ENCODE measurements at regions of chr1 and their contacts with region 1.

Region 1: GRCh38 chr1:32400876-32401631 is 6.8 kb upstream of the BSDC1 start:
- DNase-seq: peak; percentile 31
- H3K4me3 ChIP-seq: no peak overlapping the region
- CTCF ChIP-seq: peak; percentile 84

Region 2: GRCh38 chr1:32413507-32414185 is 12.6 kb after region 1 on chr1:
- CTCF ChIA-PET with region 1: interaction called, 128 read pairs
- POLR2A ChIA-PET with region 1: no interaction called
- DNase-seq: no peak
- H3K4me3 ChIP-seq: no peak overlapping the region
- CTCF ChIP-seq: peak; percentile 66

Region 3: GRCh38 chr1:32426489-32427255 is 25.6 kb after region 1 on chr1:
- CTCF ChIA-PET with region 1: interaction called, 22 read pairs
- POLR2A ChIA-PET with region 1: no interaction called
- DNase-seq: no peak
- H3K4me3 ChIP-seq: no peak overlapping the region; the same call in 1 of the 2 replicates
- CTCF ChIP-seq: no peak

Region 4: GRCh38 chr1:32619701-32620485 is 218.8 kb after region 1 on chr1:
- CTCF ChIA-PET with region 1: interaction called, 21 read pairs
- POLR2A ChIA-PET with region 1: no interaction called
- DNase-seq: no peak
- H3K4me3 ChIP-seq: no peak overlapping the region
- CTCF ChIP-seq: no peak